HCT116 (cell line): ENCODE measurements at regions of chr1 and their contacts with region 1.

Region 1: DNA sequence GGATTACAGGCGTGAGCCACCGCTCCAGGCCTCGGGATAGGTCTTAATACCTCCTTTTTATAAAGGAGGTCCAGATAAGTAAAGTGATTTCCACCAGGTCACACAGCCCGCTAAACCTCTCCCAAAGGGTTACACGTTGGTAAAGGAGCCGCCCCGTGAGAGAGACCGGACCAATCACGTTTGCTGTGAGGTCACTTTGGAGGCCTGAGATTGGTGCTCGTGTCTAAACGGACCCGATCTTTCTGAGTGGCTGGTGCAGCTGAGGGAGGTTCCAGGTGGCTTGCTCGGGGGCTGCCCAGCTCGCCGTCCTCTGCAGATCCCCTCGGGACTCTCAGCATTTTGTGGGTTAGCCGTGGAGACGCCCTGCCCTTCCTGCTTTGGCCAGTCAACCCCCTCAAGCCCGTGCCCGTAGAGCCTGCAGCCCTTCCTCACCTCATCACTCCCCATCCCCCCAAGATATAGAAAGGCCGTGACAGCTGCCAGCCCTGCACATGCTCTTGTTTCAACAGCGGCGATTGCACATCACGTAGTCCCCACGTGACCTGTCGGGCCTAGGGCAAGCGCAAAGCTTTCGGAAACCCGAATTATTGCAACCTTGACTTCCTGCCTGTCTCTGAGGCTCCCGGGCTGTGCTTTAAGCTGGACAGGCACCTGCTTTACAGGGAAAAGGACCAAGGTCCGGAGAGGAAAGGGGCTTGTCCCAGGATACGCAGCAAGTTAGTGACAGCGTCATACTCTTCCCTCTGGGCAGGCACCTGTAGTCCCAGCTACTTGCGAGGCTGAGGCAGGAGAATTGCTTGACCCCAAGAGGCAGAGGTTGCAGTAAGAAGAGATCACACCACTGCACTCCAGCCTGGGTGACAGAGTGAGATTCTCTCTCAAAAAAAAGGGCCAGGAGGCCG is 5.0 kb upstream of the COA7 start:
- DNase-seq: peak; percentile 80
- ATAC-seq: peak; percentile 79
- H3K4me3 ChIP-seq: peak overlapping the region; percentile 33 to 40
- H3K27ac ChIP-seq: peak overlapping the region; percentile 45
- H3K4me1 ChIP-seq: peaks cover 11 to 38% of the 10 kb centered on the region in 2 experiments
- H3K27me3 ChIP-seq: no peaks in the 10 kb centered on the region
- CTCF ChIP-seq: no peak
- POLR2A ChIP-seq: no peak
- RAD21 ChIP-seq: no peak

Region 2: DNA sequence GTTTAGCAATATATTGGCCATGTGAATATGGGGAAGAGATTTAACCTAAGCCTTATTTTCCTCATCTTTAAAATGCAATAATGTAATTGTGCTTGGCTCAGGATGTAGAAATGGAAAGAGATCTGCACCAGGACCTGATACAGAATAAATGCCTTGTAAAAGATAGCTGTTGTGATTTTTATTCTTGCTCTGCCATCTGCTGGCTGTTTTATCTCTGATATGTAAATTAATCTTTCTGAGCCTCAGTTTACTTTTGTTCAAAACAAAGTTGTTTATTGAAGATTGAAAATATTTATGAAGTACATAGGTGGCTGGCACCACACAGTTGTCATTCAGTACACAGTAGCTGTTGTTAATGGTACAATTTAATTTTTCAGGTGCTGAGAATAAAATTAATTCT is 45.0 kb after region 1 on chr1:
- CTCF ChIA-PET with region 1: no interaction called
- POLR2A ChIA-PET with region 1: no interaction called
- RAD21 ChIA-PET with region 1: no interaction called
- intact Hi-C with region 1: loop called (anchors 2 kb)
- DNase-seq: no peak
- ATAC-seq: no peak
- H3K4me3 ChIP-seq: no peak overlapping the region
- H3K27ac ChIP-seq: no peak overlapping the region
- H3K4me1 ChIP-seq: peaks cover 11 to 22% of the 10 kb centered on the region in 2 experiments; a peak in 3 of 4 replicates
- H3K27me3 ChIP-seq: no peaks in the 10 kb centered on the region
- CTCF ChIP-seq: peak in 2 of 3 experiments; percentile 24 to 52; a peak in 3 of 6 replicates
- POLR2A ChIP-seq: no peak
- RAD21 ChIP-seq: peak; percentile 60; the same call in 1 of the 2 replicates

Region 3: DNA sequence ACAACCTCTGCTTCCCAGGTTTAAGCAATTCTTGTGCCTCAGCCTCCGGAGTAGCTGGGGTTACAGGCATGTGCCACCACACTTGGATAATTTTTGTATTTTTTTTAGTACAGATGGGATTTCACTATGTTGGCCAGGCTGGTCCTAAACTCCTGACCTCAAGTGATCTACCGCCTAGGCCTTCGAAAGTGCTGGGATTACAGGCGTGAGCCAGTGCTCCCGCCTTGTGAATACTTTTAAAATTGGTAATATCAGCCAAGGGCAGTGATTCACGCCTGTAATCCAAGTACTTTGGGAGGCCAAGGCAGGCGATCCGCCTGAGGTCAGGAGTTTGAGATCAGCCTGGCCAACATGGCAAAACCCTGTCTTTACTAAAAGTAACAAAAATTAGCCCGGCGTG is 56.8 kb after region 1 on chr1:
- CTCF ChIA-PET with region 1: no interaction called
- POLR2A ChIA-PET with region 1: no interaction called
- RAD21 ChIA-PET with region 1: no interaction called
- intact Hi-C with region 1: no loop called
- DNase-seq: no peak
- ATAC-seq: no peak
- H3K4me3 ChIP-seq: no peak overlapping the region
- H3K27ac ChIP-seq: no peak overlapping the region
- H3K4me1 ChIP-seq: peaks cover 8 to 16% of the 10 kb centered on the region in 2 experiments
- H3K27me3 ChIP-seq: no peaks in the 10 kb centered on the region
- CTCF ChIP-seq: no peak
- POLR2A ChIP-seq: no peak
- RAD21 ChIP-seq: no peak

Region 4: DNA sequence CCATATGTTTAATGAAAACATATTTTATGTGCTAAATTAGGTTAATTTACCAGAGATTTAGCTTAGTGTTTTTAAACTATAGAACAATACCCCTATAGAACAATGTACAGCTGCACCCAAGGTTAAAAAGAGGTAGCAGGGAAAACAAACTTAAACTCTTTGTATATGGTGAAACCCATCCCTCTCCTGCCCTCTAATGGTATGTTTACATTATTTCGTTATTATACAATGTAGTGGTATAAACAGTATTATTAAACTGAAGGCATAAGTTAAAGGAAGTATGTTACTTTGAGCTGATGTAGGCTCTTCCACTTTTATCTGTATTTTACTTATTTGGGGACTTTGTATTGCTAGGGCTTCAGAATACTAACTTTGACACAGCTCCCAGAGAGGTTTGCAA is 122.7 kb after region 1 on chr1:
- CTCF ChIA-PET with region 1: no interaction called
- POLR2A ChIA-PET with region 1: no interaction called
- RAD21 ChIA-PET with region 1: no interaction called
- intact Hi-C with region 1: loop called (anchors 10 kb)
- DNase-seq: no peak
- ATAC-seq: peak; percentile 63
- H3K4me3 ChIP-seq: no peak overlapping the region
- H3K27ac ChIP-seq: no peak overlapping the region
- H3K4me1 ChIP-seq: no peaks in the 10 kb centered on the region
- H3K27me3 ChIP-seq: no peaks in the 10 kb centered on the region
- CTCF ChIP-seq: peak; percentile 13 to 45 (median 26); a peak in 3 of 6 replicates
- POLR2A ChIP-seq: no peak
- RAD21 ChIP-seq: peak; percentile 44

Region 5: GRCh38 chr1:52920791-52921291 is 217.7 kb after region 1 on chr1:
- CTCF ChIA-PET with region 1: no interaction called
- POLR2A ChIA-PET with region 1: no interaction called
- RAD21 ChIA-PET with region 1: no interaction called
- intact Hi-C with region 1: loop called (anchors 5 kb)
- DNase-seq: no peak
- ATAC-seq: peak; percentile 9
- H3K4me3 ChIP-seq: peak overlapping the region; percentile 58 to 68
- H3K27ac ChIP-seq: peak overlapping the region; percentile 7; the same call in 1 of the 2 replicates
- H3K4me1 ChIP-seq: peaks cover 5 to 31% of the 10 kb centered on the region in 2 experiments; a peak in 3 of 4 replicates
- H3K27me3 ChIP-seq: no peaks in the 10 kb centered on the region
- CTCF ChIP-seq: no peak
- POLR2A ChIP-seq: no peak
- RAD21 ChIP-seq: no peak

Region 6: GRCh38 chr1:53182111-53182593 is 479.0 kb after region 1 on chr1:
- CTCF ChIA-PET with region 1: no interaction called
- POLR2A ChIA-PET with region 1: no interaction called
- RAD21 ChIA-PET with region 1: no interaction called
- intact Hi-C with region 1: loop called (anchors 5 kb)
- DNase-seq: peak; percentile 80
- ATAC-seq: peak; percentile 94
- H3K4me3 ChIP-seq: no peak overlapping the region
- H3K27ac ChIP-seq: no peak overlapping the region
- H3K4me1 ChIP-seq: peaks cover 0 to 13% of the 10 kb centered on the region in 2 experiments; a peak in 2 of 4 replicates
- H3K27me3 ChIP-seq: no peaks in the 10 kb centered on the region
- CTCF ChIP-seq: peak; percentile 67 to 96 (median 77)
- POLR2A ChIP-seq: no peak
- RAD21 ChIP-seq: peak; percentile 72